Cardiac septum (tissue), 1 donor: ENCODE measurements at regions of chr10 and their contacts with region 1.

Region 1: GRCh38 chr10:71663311-71663710 is 56.3 kb downstream of the C10orf105 start:
- DNase-seq: no peak

Region 2: DNA sequence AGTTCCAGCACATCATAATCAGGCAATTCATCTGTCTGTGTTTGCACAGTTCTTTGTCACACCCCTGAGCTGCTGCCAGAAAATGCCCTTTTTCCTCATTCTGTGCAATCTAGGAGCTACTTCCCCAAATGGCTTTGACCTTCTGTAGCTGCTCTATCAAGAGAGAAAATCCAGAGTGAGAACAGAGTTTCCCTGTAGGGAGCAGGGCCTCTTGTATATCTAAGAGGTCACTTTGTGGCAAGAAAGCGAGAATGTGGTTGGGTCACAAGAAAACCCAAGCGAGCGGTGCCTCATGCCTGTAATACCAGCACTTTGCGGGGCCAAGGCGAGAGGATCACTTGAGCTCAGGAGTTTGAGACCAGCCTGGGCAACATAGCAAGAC is 319.9 kb before region 1 on chr10:
- intact Hi-C with region 1: no loop called
- DNase-seq: no peak

Region 3: GRCh38 chr10:71708301-71708703 is 45.0 kb after region 1 on chr10:
- intact Hi-C with region 1: loop called (anchors 5 kb)
- DNase-seq: peak; percentile 92

Region 4: DNA sequence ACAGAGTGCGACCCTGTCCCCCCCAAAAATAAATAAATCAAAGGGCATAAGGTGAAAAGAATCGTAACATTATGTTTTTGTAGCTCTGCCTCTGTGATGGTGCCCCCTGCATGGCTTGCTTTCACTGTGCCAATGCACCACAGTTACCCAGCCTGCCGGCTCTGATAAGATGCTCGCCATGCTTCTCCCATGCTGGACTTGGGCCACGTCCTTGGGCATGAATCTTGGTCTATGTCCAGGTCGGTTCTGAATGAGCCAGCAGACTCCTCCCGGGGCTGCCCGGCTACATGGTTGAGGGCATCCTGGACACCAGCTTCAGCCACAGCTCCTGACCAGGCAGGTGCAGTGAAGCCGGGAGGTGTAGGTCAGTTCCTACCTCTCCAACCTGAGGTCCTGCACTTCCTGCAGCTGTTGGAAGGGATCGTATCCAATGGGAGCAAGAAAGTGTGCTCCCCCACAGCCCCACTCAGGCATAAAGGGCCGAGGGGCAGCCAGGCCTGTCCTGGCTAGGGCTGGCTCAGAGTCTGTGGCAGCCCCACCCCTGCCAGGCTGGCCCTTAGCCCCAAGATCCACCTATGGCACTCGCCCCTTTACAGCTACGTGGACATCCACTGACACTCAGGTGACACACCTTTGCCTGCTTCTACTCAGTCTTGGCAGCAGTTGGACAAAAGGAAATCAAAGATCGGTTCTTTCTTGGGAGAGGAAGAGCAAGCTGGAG is 335.0 kb after region 1 on chr10:
- intact Hi-C with region 1: no loop called
- DNase-seq: peak; percentile 85